PC-3 (cell line): ENCODE measurements at regions of chrX and their contacts with region 1.

Region 1: GRCh38 chrX:5113128-5113527 is 1115.5 kb downstream of the NLGN4X start:
- DNase-seq: peak; percentile 65
- ATAC-seq: peak; percentile 69
- H3K4me3 ChIP-seq: no peak overlapping the region
- H3K27ac ChIP-seq: no peak overlapping the region
- H3K4me1 ChIP-seq: no peaks in the 10 kb centered on the region
- H3K27me3 ChIP-seq: no peaks in the 10 kb centered on the region
- CTCF ChIP-seq: peak; percentile 69

Region 2: DNA sequence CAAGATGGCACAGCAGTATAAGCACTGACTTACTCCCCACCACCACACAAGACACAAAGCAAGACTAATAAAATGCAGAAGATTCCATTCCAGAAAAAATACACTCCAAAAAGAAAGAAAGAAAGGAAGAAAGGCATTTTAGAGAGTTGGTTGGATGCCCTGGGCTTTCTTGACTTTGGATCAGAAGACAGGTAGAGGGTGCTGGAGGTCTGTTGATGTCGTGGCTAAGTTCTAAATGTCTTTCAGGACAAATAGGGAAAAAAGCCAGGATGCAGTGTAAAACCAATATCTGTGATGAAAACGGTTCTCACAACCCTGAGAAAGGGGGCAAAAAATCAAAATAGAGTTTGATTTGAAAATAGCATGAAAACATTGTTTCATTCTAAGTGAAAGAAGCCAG is 844.5 kb before region 1 on chrX:
- CTCF ChIA-PET with region 1: no interaction called
- POLR2A ChIA-PET with region 1: no interaction called
- intact Hi-C with region 1: loop called (anchors 5 kb)
- DNase-seq: peak; percentile 45
- ATAC-seq: peak; percentile 40; the same call in 1 of the 2 replicates
- H3K4me3 ChIP-seq: no peak overlapping the region
- H3K27ac ChIP-seq: no peak overlapping the region
- H3K4me1 ChIP-seq: peaks cover 9% of the 10 kb centered on the region
- H3K27me3 ChIP-seq: no peaks in the 10 kb centered on the region
- CTCF ChIP-seq: peak; percentile 55

Region 3: GRCh38 chrX:4547213-4547836 is 565.8 kb before region 1 on chrX:
- CTCF ChIA-PET with region 1: no interaction called
- POLR2A ChIA-PET with region 1: no interaction called
- intact Hi-C with region 1: loop called (anchors 2 kb)
- DNase-seq: peak; percentile 77
- ATAC-seq: peak; percentile 52; the same call in 1 of the 2 replicates
- H3K4me3 ChIP-seq: no peak overlapping the region
- H3K27ac ChIP-seq: no peak overlapping the region
- H3K4me1 ChIP-seq: peaks cover 14% of the 10 kb centered on the region
- H3K27me3 ChIP-seq: no peaks in the 10 kb centered on the region
- CTCF ChIP-seq: peak; percentile 87

Region 4: DNA sequence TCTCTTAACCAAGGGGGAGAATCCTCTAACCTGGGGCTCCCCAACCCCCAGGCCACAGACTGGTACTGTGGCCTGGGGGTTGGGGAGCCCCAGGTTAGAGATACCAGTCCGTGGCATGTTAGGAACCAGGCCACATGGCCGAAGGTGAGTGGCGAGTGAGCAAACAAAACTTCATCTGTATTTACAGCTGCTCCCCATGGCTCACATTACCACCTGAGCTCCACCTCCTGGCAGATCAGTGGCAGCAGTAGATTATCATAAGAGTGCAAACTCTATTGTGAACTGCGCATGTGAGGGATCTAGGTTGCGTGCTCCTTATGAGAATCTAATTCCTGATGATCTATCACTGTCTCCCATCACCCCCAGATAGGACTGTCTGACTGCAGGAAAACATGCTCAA is 442.5 kb before region 1 on chrX:
- CTCF ChIA-PET with region 1: no interaction called
- POLR2A ChIA-PET with region 1: no interaction called
- intact Hi-C with region 1: loop called (anchors 5 kb)
- DNase-seq: peak; percentile 54
- ATAC-seq: peak; percentile 61
- H3K4me3 ChIP-seq: no peak overlapping the region
- H3K27ac ChIP-seq: no peak overlapping the region
- H3K4me1 ChIP-seq: peaks cover 51% of the 10 kb centered on the region
- H3K27me3 ChIP-seq: no peaks in the 10 kb centered on the region
- CTCF ChIP-seq: peak; percentile 40

Region 5: GRCh38 chrX:4787987-4788386 is 325.1 kb before region 1 on chrX:
- CTCF ChIA-PET with region 1: no interaction called
- POLR2A ChIA-PET with region 1: no interaction called
- intact Hi-C with region 1: loop called (anchors 2 kb)
- DNase-seq: peak; percentile 54
- ATAC-seq: peak; percentile 90
- H3K4me3 ChIP-seq: no peak overlapping the region
- H3K27ac ChIP-seq: no peak overlapping the region
- H3K4me1 ChIP-seq: no peaks in the 10 kb centered on the region
- H3K27me3 ChIP-seq: no peaks in the 10 kb centered on the region
- CTCF ChIP-seq: peak; percentile 50

Region 6: GRCh38 chrX:4978613-4979012 is 134.5 kb before region 1 on chrX:
- CTCF ChIA-PET with region 1: no interaction called
- POLR2A ChIA-PET with region 1: no interaction called
- intact Hi-C with region 1: loop called (anchors 2 kb)
- DNase-seq: no peak
- ATAC-seq: no peak
- H3K4me3 ChIP-seq: no peak overlapping the region
- H3K27ac ChIP-seq: no peak overlapping the region
- H3K4me1 ChIP-seq: no peaks in the 10 kb centered on the region
- H3K27me3 ChIP-seq: no peaks in the 10 kb centered on the region
- CTCF ChIP-seq: no peak